ENCODE measurements at regions of chr16 and their contacts with region 1.

Region 1: DNA sequence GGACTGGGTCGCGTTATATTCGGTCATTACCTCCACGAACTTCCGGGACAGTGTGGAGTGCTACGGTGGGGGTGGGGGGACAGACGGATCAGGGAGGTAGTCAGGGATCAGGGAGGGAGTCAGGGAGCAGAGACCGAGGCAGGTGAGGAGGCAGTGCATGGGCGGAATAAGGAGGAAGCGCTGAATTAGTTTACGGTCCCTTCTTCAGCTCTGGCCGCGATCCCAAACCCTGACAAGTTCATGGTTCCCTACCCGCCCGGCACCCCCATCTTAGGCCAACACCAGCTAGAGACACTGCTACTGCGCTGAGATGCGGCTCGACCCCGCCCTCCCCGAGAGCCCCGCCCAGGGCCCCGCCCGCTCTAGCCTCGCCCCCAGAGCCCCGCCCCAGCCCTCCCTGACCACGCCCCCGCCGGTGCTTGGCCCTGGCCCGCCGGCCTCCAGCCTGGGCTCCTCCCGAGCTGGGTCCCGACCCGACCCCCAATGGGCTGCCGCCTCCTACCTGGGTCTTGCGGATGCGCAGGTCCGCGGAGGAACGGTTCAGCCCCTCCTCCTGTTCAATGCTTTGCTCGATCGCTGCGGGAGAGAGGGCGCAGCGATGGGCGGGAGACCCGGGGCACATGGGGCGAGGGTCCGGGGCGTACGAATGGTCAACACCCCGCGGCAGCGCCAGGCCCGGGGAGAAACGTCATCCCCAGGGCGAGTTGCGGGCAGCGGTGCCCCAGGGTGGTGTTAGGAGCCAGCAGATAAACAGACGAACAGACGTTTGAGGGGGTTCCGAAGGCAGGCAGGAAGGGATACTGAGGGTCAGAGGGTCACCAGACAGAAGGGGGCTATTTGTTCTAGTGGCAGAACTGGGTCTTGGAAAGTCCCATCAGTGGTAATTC is 12.2 kb downstream of the HSD3B7 start:
- DNase-seq: peak; percentile 81 to 91
- H3K4me3 ChIP-seq: peak overlapping the region; percentile 53 to 59
- H3K27ac ChIP-seq: peak overlapping the region; percentile 71 to 79
- H3K4me1 ChIP-seq: peaks cover 0 to 27% (median 17%) of the 10 kb centered on the region in 4 donors
- H3K27me3 ChIP-seq: no peaks in the 10 kb centered on the region
- CTCF ChIP-seq: no peak

Region 2: DNA sequence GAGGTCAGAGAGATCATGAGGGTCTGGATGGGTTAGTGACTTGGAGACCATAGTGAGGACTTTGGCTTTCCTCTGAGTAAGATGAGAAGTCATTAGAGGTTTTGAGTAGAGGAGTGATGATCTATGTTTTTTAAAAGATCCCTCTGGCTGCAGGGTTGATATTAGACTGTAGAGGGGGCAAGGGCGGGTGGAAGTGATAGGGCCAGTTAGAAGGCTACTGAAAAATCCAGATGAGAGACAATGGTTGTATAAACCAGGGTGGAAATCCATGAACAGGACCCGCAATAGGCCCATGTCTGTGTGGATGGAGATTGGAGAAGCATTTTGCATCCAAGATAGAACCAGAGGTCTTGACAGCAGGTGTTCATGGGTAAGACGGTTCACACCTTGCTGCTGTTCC is 514.9 kb before region 1 on chr16:
- intact Hi-C with region 1: no loop called
- DNase-seq: no peak
- H3K4me3 ChIP-seq: no peak overlapping the region
- H3K27ac ChIP-seq: no peak overlapping the region
- H3K4me1 ChIP-seq: no peaks in the 10 kb centered on the region
- H3K27me3 ChIP-seq: peaks cover 0 to 5% of the 10 kb centered on the region in 2 donors
- CTCF ChIP-seq: no peak

Region 3: DNA sequence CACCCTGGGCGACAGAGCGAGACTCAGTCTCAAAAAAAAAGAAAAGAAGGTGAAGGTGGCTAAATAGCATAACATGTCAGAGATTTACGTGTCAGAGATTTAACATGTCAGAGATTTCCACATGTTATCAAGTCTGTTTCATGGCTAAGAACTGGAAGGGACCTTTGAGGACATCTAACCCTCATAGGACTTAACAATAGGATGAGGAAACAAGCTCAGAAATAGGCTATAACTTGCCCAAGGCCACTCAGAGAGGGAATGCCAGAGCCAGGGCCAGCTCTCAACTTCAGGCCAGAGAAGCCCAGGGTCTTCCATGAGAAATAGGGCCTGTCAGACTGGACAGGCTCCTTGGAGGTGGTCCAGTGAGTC is 183.4 kb before region 1 on chr16:
- intact Hi-C with region 1: no loop called
- DNase-seq: no peak
- H3K4me3 ChIP-seq: peak overlapping the region; percentile 42 to 57
- H3K27ac ChIP-seq: peak overlapping the region; percentile 61 to 79
- H3K4me1 ChIP-seq: peaks cover 0 to 5% (median 4%) of the 10 kb centered on the region in 4 donors
- H3K27me3 ChIP-seq: no peaks in the 10 kb centered on the region
- CTCF ChIP-seq: no peak

Region 4: GRCh38 chr16:31010585-31011325 is 13.5 kb after region 1 on chr16 and contains the start of gene STX1B:
- intact Hi-C with region 1: no loop called
- DNase-seq: no peak
- H3K4me3 ChIP-seq: no peak within 1 kb of the TSS
- H3K27ac ChIP-seq: no peak within 1 kb of the TSS
- H3K4me1 ChIP-seq: peaks cover 0 to 8% (median 3%) of the 10 kb centered on the region in 4 donors
- H3K27me3 ChIP-seq: peaks cover 3 to 74% of the 10 kb centered on the region in 2 donors
- CTCF ChIP-seq: no peak

Region 5: GRCh38 chr16:31032736-31033708 is 35.8 kb after region 1 on chr16 and contains the start of gene STX4:
- intact Hi-C with region 1: loop called (anchors 5 kb)
- DNase-seq: peak; percentile 97 to 98
- H3K4me3 ChIP-seq: peak within 1 kb of the TSS; percentile 83 to 99
- H3K27ac ChIP-seq: peak within 1 kb of the TSS; percentile 92 to 93
- H3K4me1 ChIP-seq: peaks cover 0 to 22% (median 12%) of the 10 kb centered on the region in 4 donors
- H3K27me3 ChIP-seq: no peaks in the 10 kb centered on the region
- CTCF ChIP-seq: peak in 1 of 2 experiments; percentile 5

Region 6: GRCh38 chr16:31044190-31044481 is 46.9 kb after region 1 on chr16:
- intact Hi-C with region 1: no loop called
- DNase-seq: no peak
- H3K4me3 ChIP-seq: no peak overlapping the region
- H3K27ac ChIP-seq: no peak overlapping the region
- H3K4me1 ChIP-seq: no peaks in the 10 kb centered on the region
- H3K27me3 ChIP-seq: no peaks in the 10 kb centered on the region
- CTCF ChIP-seq: no peak